Dendritic cell treated with granulocyte-macrophage colony-stimulating factor and Interleukin-4, amounts not matched to agents 40 ng/mL and 50 ng/mL, for 4 days (primary cell): ENCODE measurements at regions of chr13 and their contacts with region 1.

Region 1: GRCh38 chr13:98653463-98653985 is 76.6 kb upstream of the STK24 start:
- H3K4me3 Mint-ChIP-seq: no peak overlapping the region
- H3K27ac Mint-ChIP-seq: no peak overlapping the region
- H3K4me1 Mint-ChIP-seq: peaks cover 38% of the 10 kb centered on the region
- H3K27me3 Mint-ChIP-seq: peaks cover 23% of the 10 kb centered on the region

Region 2: DNA sequence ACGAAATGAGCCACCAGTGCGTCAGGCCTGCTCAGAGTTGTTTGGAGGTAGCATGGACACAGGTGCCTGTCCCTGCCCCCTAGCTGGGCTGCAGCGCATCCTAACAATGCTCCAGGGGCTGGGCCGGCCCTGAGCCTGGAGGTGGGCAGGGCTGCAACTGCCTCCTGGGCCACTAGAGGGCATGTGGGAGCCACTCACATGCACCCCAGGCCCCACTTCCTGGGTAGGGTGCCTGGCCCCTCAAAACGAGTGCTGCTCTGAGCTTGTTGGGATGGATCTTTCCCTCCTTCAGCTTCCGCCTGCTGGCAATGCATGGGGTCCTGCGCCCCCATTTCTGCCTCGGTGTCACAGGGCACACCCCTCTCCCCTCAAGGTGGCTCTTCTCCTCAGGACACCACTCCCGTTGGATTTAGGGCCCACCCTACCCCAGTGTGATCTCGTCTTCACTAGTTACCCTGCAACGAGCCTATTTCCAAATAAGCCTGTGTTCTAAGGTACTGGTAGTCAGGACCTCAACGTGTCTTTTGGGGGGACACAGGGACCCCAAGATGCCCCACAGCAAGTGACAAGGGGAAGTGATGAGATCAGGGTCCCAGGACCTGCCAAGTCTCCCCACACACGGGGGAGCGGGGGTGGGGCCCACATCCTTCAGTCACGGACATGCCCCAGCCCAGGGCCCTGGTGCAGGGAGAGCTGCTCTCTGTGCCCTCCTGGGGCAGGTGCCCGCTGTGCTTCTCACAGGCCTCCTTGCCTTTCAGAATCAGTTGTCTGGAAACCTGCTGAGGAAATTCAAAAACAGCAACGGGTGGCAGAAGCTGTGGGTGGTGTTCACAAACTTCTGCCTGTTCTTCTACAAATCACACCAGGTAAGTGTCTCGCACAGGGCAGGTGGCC is 207.9 kb before region 1 on chr13:
- intact Hi-C with region 1: loop called (anchors 1 kb)
- H3K4me3 Mint-ChIP-seq: no peak overlapping the region
- H3K27ac Mint-ChIP-seq: no peak overlapping the region
- H3K4me1 Mint-ChIP-seq: peaks cover 19% of the 10 kb centered on the region
- H3K27me3 Mint-ChIP-seq: no peaks in the 10 kb centered on the region

Region 3: DNA sequence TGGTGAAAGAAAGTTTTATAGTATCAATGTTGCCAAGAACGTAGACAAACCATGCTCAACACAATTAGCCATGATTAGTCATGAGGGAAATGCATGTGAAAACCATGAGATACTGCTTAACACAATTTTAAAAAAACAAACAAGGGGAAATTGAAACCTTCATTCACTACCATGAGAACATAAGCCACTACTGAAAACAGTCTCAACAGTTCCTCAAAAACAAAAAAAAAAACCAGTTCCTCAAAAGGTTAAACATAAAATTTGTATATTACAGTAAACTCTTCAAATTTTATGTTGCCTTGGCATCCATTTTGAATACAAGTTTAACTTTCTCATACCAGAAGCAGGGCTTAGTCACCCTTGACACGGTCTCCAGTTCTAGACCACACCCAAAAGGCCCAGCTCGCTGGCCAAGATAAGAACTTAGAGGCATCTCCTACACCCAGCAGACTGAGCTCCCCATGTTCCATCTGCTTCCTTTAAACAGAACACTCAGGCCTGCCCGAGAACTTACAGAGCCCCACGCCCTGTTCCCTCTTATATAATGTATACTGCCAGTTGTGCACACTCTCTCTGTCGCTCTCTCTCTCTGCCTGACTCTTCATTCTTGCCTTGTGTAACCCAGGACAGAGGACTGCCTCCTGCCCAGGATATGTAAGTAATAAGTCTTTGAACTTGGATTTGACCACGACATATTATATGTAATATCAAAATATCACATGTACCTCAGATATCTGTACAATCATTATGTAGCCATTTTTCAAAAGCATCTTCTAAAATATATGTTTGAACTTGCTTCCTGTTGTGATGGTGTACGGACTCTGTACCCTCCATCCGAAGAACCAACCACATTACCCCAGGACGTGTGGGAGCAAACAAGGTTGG is 144.0 kb before region 1 on chr13:
- intact Hi-C with region 1: loop called (anchors 10 kb)
- H3K4me3 Mint-ChIP-seq: peak overlapping the region; percentile 21
- H3K27ac Mint-ChIP-seq: peak overlapping the region; percentile 96
- H3K4me1 Mint-ChIP-seq: peaks cover 79% of the 10 kb centered on the region
- H3K27me3 Mint-ChIP-seq: no peaks in the 10 kb centered on the region

Region 4: GRCh38 chr13:98576963-98577822 is 76.3 kb before region 1 on chr13 and contains the start of gene STK24:
- intact Hi-C with region 1: loop called (anchors 5 kb)
- H3K4me3 Mint-ChIP-seq: peak within 1 kb of the TSS; percentile 89
- H3K27ac Mint-ChIP-seq: peak within 1 kb of the TSS; percentile 97
- H3K4me1 Mint-ChIP-seq: peaks cover 70% of the 10 kb centered on the region
- H3K27me3 Mint-ChIP-seq: no peaks in the 10 kb centered on the region

Region 5: GRCh38 chr13:98595134-98595533 is 58.4 kb before region 1 on chr13:
- intact Hi-C with region 1: loop called (anchors 1 kb)
- H3K4me3 Mint-ChIP-seq: no peak overlapping the region
- H3K27ac Mint-ChIP-seq: no peak overlapping the region
- H3K4me1 Mint-ChIP-seq: peaks cover 36% of the 10 kb centered on the region
- H3K27me3 Mint-ChIP-seq: peaks cover 10% of the 10 kb centered on the region

Region 6: GRCh38 chr13:98721825-98722510 is 68.4 kb after region 1 on chr13:
- intact Hi-C with region 1: no loop called
- H3K4me3 Mint-ChIP-seq: no peak overlapping the region
- H3K27ac Mint-ChIP-seq: no peak overlapping the region
- H3K4me1 Mint-ChIP-seq: no peaks in the 10 kb centered on the region
- H3K27me3 Mint-ChIP-seq: peaks cover 2% of the 10 kb centered on the region